Heart left ventricle (tissue), 16 donors: ENCODE measurements at regions of chr7 and their contacts with region 1.

Region 1: DNA sequence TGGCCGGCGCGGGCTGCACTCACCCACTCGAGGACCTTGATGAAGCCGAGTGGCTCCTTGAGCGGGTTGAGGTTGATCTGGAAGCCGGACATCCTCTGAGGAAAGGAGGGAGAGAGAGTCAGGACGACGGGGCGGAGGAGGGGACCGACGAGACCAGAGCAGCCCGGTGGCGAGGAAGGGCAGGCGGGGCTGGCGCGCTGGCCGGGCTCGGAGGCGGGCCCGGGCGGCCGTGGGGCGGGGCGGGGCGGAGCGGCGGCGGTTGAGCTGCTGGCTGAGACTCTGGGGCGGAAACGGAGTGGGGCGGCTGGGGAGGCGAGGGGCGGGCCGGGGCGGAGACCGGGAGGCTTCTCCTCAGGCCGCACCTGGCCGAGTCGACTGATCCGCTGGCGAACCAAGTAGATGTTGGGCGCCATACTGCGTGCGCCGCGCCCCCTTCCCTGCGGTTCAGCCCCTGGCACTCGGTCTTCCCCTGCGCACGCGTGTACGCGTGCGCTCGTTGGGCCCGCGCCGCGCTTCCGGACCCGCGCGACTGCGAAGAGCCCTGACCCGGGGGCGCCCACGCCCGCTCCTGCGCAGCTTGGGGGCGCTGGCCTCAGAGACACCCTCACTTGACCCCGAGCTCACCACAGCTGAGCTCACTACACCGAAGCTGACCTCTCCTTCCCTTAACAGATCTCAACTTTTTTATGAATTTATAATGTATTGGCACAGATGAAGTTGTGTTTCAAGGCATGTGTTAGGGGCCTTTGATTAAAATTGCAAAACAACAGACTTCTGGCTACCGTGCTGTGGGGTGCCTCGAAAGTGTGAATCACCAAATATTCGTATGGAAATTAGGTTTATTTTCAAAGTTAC is at the start of gene SYPL1:
- DNase-seq: peak; percentile 93 to 97 (median 95)
- ATAC-seq: peak; percentile 85 to 98 (median 95)
- H3K4me3 ChIP-seq: peak within 1 kb of the TSS; percentile 48 to 94 (median 76)
- H3K27ac ChIP-seq: peak within 1 kb of the TSS; percentile 93 to 100 (median 98)
- H3K4me1 ChIP-seq: peaks cover 0 to 40% (median 30%) of the 10 kb centered on the region in 12 donors
- H3K27me3 ChIP-seq: no peaks in the 10 kb centered on the region
- CTCF ChIP-seq: peak in 5 of 12 donors; percentile 21 to 48 (median 41)
- POLR2A ChIP-seq: no peak
- total RNA-seq, gene SYPL1: 71.7 to 99.8 (median 78.5) TPM

Region 2: DNA sequence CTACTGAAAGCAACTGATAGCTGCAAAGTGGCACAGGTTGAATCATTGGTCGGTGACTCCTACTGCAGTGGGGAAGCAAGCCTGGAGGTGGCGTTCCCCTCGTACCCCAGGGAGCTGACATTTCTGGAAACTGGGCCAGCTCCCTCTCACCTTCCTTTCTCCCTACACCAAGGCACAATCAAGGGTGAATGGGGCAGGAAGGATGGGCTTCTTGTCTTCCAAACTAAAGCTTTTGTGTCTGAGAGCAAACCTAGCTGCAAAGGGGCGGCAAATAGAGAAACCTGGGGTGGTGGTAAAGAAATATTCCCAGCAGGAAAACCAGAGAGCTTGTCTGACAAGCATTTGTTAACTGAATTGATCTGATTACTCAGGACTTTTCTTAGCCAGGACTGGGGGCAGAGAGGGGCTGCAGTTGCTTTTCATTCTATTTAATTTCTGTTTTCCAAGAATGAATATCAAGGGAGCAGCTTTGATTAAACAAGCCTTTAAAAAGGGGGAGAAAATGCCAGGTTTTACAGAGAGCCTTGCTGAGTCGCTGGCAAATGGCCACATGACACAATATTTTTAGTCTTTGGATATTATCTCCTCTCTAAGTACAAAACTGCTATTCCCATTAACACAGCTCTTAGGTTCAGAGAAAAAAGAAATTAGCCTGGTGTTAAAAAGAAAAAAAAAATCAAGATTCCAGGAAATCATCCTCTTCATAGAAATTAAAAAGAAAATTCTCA is 121.5 kb before region 1 on chr7:
- intact Hi-C with region 1: no loop called
- DNase-seq: peak in 3 of 5 donors; percentile 24 to 43 (median 27)
- ATAC-seq: no peak
- H3K4me3 ChIP-seq: no peak overlapping the region
- H3K27ac ChIP-seq: no peak overlapping the region
- H3K4me1 ChIP-seq: peaks cover 0 to 10% (median 0%) of the 10 kb centered on the region in 12 donors
- H3K27me3 ChIP-seq: no peaks in the 10 kb centered on the region
- CTCF ChIP-seq: no peak
- POLR2A ChIP-seq: no peak

Region 3: GRCh38 chr7:106064771-106065585 is 47.4 kb before region 1 on chr7:
- intact Hi-C with region 1: loop called (anchors 1 to 5 kb)
- DNase-seq: peak; percentile 84 to 94 (median 89)
- ATAC-seq: peak; percentile 94 to 96 (median 94)
- H3K4me3 ChIP-seq: peak overlapping the region in 10 of 12 donors; percentile 7 to 51 (median 34)
- H3K27ac ChIP-seq: peak overlapping the region; percentile 65 to 96 (median 86)
- H3K4me1 ChIP-seq: peaks cover 0 to 38% (median 32%) of the 10 kb centered on the region in 12 donors
- H3K27me3 ChIP-seq: no peaks in the 10 kb centered on the region
- CTCF ChIP-seq: peak in 1 of 12 donors; percentile 18
- POLR2A ChIP-seq: no peak

Region 4: DNA sequence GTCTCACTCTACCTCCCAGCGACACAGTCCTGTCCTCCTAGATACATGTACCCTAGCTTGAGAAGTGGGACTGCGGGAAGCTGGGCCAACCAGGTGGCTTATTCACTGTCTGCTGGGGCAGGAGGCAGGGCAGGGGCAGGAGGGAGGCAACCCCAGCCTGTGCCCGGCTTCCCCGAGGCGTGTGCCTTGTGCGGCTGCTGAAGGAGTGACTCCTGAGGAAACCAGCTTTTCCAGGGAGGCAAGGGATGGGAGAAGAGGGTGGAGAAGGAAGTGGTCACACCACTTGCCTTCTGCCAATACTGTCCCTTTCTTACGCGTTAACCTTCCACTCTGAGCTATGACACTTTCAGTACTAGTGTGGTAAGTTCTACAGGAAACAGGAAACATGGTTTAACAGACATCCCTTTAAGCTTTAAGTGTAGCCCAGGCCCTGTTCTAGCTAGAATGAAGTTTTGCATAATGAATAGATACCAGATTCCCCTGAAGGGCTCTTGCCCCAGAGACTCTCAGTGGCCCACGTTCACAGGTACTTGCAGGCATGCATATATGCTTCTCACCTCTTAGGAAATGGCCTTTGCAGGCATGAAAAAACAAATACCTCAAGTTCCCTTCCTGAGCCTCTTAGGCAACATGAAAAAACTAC is 40.9 kb before region 1 on chr7:
- intact Hi-C with region 1: loop called in 6 of 10 experiments (anchors 5 kb)
- DNase-seq: no peak
- ATAC-seq: peak; percentile 32 to 73 (median 60)
- H3K4me3 ChIP-seq: peak overlapping the region in 1 of 12 donors; percentile 16
- H3K27ac ChIP-seq: peak overlapping the region; percentile 52 to 87 (median 72)
- H3K4me1 ChIP-seq: peaks cover 0 to 66% (median 40%) of the 10 kb centered on the region in 12 donors
- H3K27me3 ChIP-seq: no peaks in the 10 kb centered on the region
- CTCF ChIP-seq: no peak
- POLR2A ChIP-seq: no peak

Region 5: DNA sequence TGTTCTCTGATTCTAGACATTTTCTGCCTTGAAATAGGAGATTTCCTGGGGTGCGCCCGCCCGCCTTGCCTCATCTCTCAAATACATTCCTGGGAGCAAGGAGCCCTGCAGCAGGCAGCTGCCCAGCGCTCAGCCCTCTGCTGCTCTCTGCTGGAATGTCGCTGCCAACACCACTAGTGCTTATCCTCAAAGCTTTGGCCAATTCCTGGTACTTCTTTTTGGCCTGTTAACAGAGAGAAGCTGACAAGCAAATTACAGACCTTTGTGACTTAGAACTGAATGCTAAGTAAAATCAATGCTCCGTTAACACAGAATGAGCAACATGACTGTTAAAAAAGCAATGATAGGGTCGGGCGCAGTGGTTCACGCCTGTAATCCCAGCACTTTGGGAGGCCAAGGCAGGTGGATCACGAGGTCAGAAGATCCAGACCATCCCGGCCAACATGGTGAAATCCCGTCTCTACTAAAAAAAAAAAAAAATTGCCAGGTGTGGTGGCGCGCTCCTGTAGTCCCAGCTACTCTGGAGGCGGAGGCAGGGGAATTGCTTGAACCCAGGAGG is 41.6 kb after region 1 on chr7:
- intact Hi-C with region 1: loop called in 4 of 10 experiments (anchors 5 kb)
- DNase-seq: peak; percentile 73 to 89 (median 78)
- ATAC-seq: peak; percentile 89 to 99 (median 97)
- H3K4me3 ChIP-seq: peak overlapping the region in 4 of 12 donors; percentile 10 to 16 (median 13)
- H3K27ac ChIP-seq: no peak overlapping the region
- H3K4me1 ChIP-seq: peaks cover 0 to 19% (median 10%) of the 10 kb centered on the region in 12 donors
- H3K27me3 ChIP-seq: peaks cover 0 to 5% (median 0%) of the 10 kb centered on the region in 9 donors
- CTCF ChIP-seq: peak; percentile 84 to 99 (median 95)
- POLR2A ChIP-seq: no peak

Region 6: DNA sequence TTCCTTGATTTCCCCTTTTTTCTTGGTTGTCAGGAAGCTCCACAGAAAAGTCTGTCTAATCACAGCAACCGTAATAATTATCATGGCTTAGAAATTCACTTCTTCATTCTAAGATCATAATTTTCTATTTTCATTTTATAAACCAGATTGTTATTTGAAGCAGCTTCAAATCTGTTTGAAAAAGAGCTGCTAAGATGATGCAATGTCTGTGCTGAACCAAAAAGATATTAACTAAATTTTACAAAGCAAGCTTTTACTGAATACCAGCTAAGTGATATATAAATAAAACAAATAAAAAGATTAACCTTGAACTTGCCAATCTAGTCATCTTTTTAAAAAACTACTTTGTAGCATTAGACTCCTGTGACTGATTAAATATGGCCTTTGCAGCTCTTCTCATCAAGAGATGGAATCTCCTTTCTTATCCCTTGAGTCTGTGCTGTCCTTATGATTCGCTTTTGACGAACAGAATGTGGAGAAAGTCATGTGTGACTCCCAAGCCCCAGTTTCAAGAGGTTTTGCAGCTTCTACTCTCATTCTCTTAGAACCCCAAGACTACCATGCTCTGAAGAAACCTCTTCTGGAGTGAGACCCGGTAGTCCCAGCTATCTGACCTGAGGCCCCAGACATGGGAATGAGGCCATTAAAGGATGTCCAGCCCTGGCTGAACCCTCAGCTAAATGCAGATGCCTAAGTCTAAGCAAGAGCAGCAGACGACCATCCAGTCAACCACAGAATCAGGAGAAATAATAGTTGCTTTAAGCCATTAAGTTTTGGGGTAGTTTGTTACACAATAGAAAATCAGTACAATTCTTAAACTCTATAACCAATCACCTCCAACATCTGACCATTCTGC is 158.0 kb after region 1 on chr7:
- intact Hi-C with region 1: no loop called
- DNase-seq: no peak
- ATAC-seq: peak in 1 of 4 donors; percentile 22
- H3K4me3 ChIP-seq: no peak overlapping the region
- H3K27ac ChIP-seq: peak overlapping the region in 9 of 12 donors; percentile 2 to 58 (median 33)
- H3K4me1 ChIP-seq: peaks cover 0 to 41% (median 12%) of the 10 kb centered on the region in 12 donors
- H3K27me3 ChIP-seq: no peaks in the 10 kb centered on the region
- CTCF ChIP-seq: no peak
- POLR2A ChIP-seq: no peak